CD4-positive, alpha-beta T cell (primary cell): ENCODE measurements at regions of chr16 and their contacts with region 1.

Region 1: GRCh38 chr16:30747799-30748634 is at the start of gene PHKG2:
- DNase-seq: peak; percentile 88 to 99 (median 94)
- ATAC-seq: peak; percentile 94
- H3K4me3 ChIP-seq: peak within 1 kb of the TSS; percentile 72
- H3K4me3 Mint-ChIP-seq: peak within 1 kb of the TSS; percentile 87
- H3K27ac ChIP-seq: peak within 1 kb of the TSS; percentile 8 to 68
- H3K27ac Mint-ChIP-seq: peak within 1 kb of the TSS; percentile 68
- H3K4me1 ChIP-seq: peaks cover 19% of the 10 kb centered on the region
- H3K4me1 Mint-ChIP-seq: peaks cover 30% of the 10 kb centered on the region
- H3K27me3 ChIP-seq: no peaks in the 10 kb centered on the region
- H3K27me3 Mint-ChIP-seq: no peaks in the 10 kb centered on the region
- CTCF ChIP-seq: no peak
- total RNA-seq, gene PHKG2: 24.8 to 25.2 TPM

Region 2: GRCh38 chr16:30394592-30395154 is 353.3 kb before region 1 on chr16:
- CTCF ChIA-PET with region 1: no interaction called
- POLR2A ChIA-PET with region 1: no interaction called
- intact Hi-C with region 1: no loop called
- DNase-seq: no peak
- ATAC-seq: no peak
- H3K4me3 ChIP-seq: peak overlapping the region; percentile 86
- H3K4me3 Mint-ChIP-seq: peak overlapping the region; percentile 90
- H3K27ac ChIP-seq: peak overlapping the region; percentile 34 to 56
- H3K27ac Mint-ChIP-seq: peak overlapping the region; percentile 57
- H3K4me1 ChIP-seq: peaks cover 39% of the 10 kb centered on the region
- H3K4me1 Mint-ChIP-seq: peaks cover 35% of the 10 kb centered on the region
- H3K27me3 ChIP-seq: no peaks in the 10 kb centered on the region
- H3K27me3 Mint-ChIP-seq: no peaks in the 10 kb centered on the region
- CTCF ChIP-seq: no peak

Region 3: GRCh38 chr16:30698139-30698815 is 49.7 kb before region 1 on chr16:
- CTCF ChIA-PET with region 1: interaction called, 4 read pairs
- POLR2A ChIA-PET with region 1: interaction called, 7 read pairs
- intact Hi-C with region 1: loop called in 1 of 2 experiments (anchors 5 kb)
- DNase-seq: peak; percentile 97 to 100 (median 99)
- ATAC-seq: peak; percentile 75
- H3K4me3 ChIP-seq: peak overlapping the region; percentile 97
- H3K4me3 Mint-ChIP-seq: peak overlapping the region; percentile 98
- H3K27ac ChIP-seq: peak overlapping the region; percentile 100
- H3K27ac Mint-ChIP-seq: peak overlapping the region; percentile 100
- H3K4me1 ChIP-seq: peaks cover 38% of the 10 kb centered on the region
- H3K4me1 Mint-ChIP-seq: peaks cover 37% of the 10 kb centered on the region
- H3K27me3 ChIP-seq: no peaks in the 10 kb centered on the region
- H3K27me3 Mint-ChIP-seq: no peaks in the 10 kb centered on the region
- CTCF ChIP-seq: no peak

Region 4: DNA sequence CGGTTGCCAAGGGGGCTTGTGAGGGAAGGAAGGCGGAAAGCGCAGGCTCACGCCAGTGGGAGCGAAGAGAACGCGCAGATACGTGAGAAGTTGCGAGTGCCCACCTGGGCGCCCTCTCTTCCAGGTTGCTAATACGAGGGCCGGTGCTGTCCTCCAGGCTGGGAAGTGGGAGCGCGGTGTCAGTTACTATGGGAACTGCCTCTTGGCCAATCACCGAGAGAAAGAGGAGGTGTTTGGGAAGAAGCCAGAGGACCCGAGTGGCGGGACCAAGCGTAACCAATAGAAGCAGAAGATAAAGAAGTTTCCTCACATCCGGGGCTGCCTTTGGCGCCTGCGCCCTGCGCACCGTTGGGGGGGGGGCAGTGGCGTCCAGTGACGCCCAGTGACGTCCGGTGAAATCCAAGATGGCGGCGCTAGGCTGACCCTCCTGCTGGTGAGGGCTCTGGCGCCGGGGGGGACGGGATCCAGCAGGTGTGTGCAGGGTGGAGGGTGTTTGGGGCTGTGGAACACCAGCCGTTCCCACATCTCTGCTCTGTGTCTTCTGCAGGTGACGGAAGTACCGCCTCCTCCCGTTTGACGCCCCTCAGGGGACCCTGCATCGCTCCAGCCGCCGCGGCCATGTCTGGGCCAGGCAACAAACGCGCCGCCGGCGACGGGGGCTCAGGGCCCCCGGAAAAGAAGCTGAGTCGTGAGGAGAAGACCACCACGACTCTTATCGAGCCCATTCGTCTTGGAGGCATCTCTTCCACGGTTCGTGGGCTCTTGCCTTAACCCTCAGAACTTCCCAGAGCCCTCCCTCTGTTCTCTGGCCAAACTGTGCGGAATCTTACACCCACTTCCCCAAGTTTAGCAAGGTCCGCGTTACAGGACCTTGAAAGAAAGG is 14.2 kb after region 1 on chr16 and contains the starts of genes CFAP119 and RNF40:
- CTCF ChIA-PET with region 1: no interaction called
- POLR2A ChIA-PET with region 1: interaction called, 18 read pairs
- intact Hi-C with region 1: loop called (anchors 1 kb)
- DNase-seq: peak; percentile 70 to 96 (median 85)
- ATAC-seq: peak; percentile 91
- H3K4me3 ChIP-seq: peak within 1 kb of the TSS; percentile 99
- H3K4me3 Mint-ChIP-seq: peak within 1 kb of the TSS; percentile 99
- H3K27ac ChIP-seq: peak within 1 kb of the TSS; percentile 71 to 90
- H3K27ac Mint-ChIP-seq: peak within 1 kb of the TSS; percentile 85
- H3K4me1 ChIP-seq: peaks cover 35% of the 10 kb centered on the region
- H3K4me1 Mint-ChIP-seq: peaks cover 30% of the 10 kb centered on the region
- H3K27me3 ChIP-seq: no peaks in the 10 kb centered on the region
- H3K27me3 Mint-ChIP-seq: no peaks in the 10 kb centered on the region
- CTCF ChIP-seq: no peak
- total RNA-seq, gene CFAP119: 1.7 to 2.2 TPM
- total RNA-seq, gene RNF40: 63.0 to 65.2 TPM

Region 5: DNA sequence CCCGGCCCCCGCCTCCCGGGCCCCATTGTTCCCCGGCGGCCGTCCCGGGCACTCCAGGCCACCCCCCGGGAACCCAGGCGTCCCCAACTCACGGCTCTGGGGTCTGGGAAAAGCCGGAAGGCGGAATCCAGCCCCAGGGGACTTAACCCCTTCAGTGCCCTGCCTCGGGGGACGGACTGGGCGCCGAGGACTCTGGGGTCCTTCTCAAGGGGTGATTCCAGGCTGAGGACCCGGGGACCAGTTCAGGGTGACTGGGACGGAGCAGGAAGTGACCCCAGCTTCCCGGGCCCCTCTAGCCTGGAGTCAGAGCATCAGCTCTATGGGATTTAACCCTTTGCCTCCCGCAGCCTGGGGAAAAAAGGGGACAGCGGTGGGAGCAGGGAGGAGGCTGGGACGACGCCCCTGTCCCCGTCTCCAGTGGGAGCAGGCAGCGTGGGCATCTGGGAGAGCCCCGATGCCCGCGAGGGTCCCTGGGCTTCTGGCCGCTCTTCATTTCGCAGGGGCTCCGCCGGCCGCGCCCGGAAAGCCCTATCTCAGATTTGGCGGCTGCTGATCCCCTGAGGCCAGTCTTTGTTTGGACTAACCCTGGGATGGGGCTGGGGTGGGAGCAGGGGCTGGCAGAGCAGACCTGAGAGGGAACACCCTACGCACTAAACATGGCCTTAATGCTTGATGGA is 39.1 kb after region 1 on chr16 and contains the start of gene ZNF629:
- CTCF ChIA-PET with region 1: no interaction called
- POLR2A ChIA-PET with region 1: no interaction called
- intact Hi-C with region 1: no loop called
- DNase-seq: peak in 8 of 14 experiments; percentile 12 to 57 (median 37)
- ATAC-seq: peak; percentile 45
- H3K4me3 ChIP-seq: peak within 1 kb of the TSS; percentile 85
- H3K4me3 Mint-ChIP-seq: peak within 1 kb of the TSS; percentile 88
- H3K27ac ChIP-seq: no peak within 1 kb of the TSS
- H3K27ac Mint-ChIP-seq: no peak within 1 kb of the TSS
- H3K4me1 ChIP-seq: peaks cover 20% of the 10 kb centered on the region
- H3K4me1 Mint-ChIP-seq: peaks cover 21% of the 10 kb centered on the region
- H3K27me3 ChIP-seq: peaks cover 7 to 17% of the 10 kb centered on the region in 2 experiments
- H3K27me3 Mint-ChIP-seq: peaks cover 5% of the 10 kb centered on the region
- CTCF ChIP-seq: no peak
- total RNA-seq, gene ZNF629: 1.6 to 1.7 TPM

Region 6: GRCh38 chr16:30805370-30806169 is 57.6 kb after region 1 on chr16:
- CTCF ChIA-PET with region 1: no interaction called
- POLR2A ChIA-PET with region 1: interaction called, 12 read pairs
- intact Hi-C with region 1: no loop called
- DNase-seq: peak; percentile 28 to 77 (median 56)
- ATAC-seq: peak; percentile 74
- H3K4me3 ChIP-seq: peak overlapping the region; percentile 87
- H3K4me3 Mint-ChIP-seq: peak overlapping the region; percentile 87
- H3K27ac ChIP-seq: peak overlapping the region; percentile 38 to 59
- H3K27ac Mint-ChIP-seq: peak overlapping the region; percentile 52
- H3K4me1 ChIP-seq: peaks cover 21% of the 10 kb centered on the region
- H3K4me1 Mint-ChIP-seq: peaks cover 18% of the 10 kb centered on the region
- H3K27me3 ChIP-seq: no peaks in the 10 kb centered on the region
- H3K27me3 Mint-ChIP-seq: no peaks in the 10 kb centered on the region
- CTCF ChIP-seq: no peak